ENCODE measurements at regions of chr12 and their contacts with region 1.

Region 1: GRCh38 chr12:74801625-74802024 is 264.0 kb downstream of the ATXN7L3B start:
- DNase-seq: peak; percentile 11
- H3K4me3 ChIP-seq: no peak overlapping the region
- H3K27ac ChIP-seq: no peak overlapping the region
- H3K4me1 ChIP-seq: no peaks in the 10 kb centered on the region
- H3K27me3 ChIP-seq: no peaks in the 10 kb centered on the region
- CTCF ChIP-seq: no peak

Region 2: DNA sequence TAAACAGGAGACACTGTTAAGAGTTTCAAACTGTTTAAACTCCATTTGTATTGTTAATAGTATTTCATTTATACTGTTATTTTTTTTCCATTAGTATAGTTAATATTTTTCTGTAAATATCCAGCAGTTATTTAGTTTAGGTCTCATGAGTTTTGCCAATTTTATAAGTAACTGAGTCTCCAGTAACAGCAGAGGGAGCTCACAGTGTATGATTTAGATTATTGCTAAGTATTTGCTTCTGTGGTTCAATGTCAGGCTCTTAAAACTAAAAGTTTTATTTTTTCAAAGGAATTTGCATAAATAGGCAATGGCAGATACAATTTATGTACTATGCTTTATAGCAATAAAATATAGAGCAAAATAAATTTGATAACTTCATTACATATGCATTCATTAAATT is 54.3 kb before region 1 on chr12:
- CTCF ChIA-PET with region 1: no interaction called
- POLR2A ChIA-PET with region 1: no interaction called
- intact Hi-C with region 1: loop called (anchors 5 kb)
- DNase-seq: peak; percentile 37
- H3K4me3 ChIP-seq: no peak overlapping the region
- H3K27ac ChIP-seq: no peak overlapping the region
- H3K4me1 ChIP-seq: no peaks in the 10 kb centered on the region
- H3K27me3 ChIP-seq: no peaks in the 10 kb centered on the region
- CTCF ChIP-seq: peak; percentile 39; the same call in 1 of the 2 replicates

Region 3: DNA sequence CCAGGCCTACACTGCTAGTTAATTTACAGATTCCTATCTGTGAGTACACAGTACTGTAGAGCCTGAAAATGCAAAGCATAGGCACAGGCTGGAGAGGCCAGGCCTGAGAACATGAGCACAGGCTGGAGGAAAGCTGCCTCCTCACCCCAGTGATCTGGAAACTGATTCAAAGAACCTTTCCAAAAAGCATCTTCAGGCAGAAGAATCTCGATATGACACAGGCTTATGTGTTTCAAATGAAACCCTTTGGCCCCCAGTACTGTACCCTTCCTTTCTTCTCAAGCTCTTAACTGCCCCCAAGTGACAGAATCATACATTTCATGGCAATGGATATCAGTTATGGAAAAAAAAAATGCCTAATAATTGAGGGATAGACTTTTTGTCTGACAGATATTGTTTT is 286.0 kb after region 1 on chr12:
- CTCF ChIA-PET with region 1: no interaction called
- POLR2A ChIA-PET with region 1: no interaction called
- intact Hi-C with region 1: loop called (anchors 5 kb)
- DNase-seq: peak; percentile 25
- H3K4me3 ChIP-seq: no peak overlapping the region
- H3K27ac ChIP-seq: no peak overlapping the region
- H3K4me1 ChIP-seq: no peaks in the 10 kb centered on the region
- H3K27me3 ChIP-seq: no peaks in the 10 kb centered on the region
- CTCF ChIP-seq: peak; percentile 34; the same call in 1 of the 2 replicates

Region 4: GRCh38 chr12:75289753-75290152 is 488.1 kb after region 1 on chr12:
- CTCF ChIA-PET with region 1: no interaction called
- POLR2A ChIA-PET with region 1: no interaction called
- intact Hi-C with region 1: loop called (anchors 5 kb)
- DNase-seq: peak; percentile 28
- H3K4me3 ChIP-seq: no peak overlapping the region
- H3K27ac ChIP-seq: no peak overlapping the region
- H3K4me1 ChIP-seq: no peaks in the 10 kb centered on the region
- H3K27me3 ChIP-seq: no peaks in the 10 kb centered on the region
- CTCF ChIP-seq: peak; percentile 51

Measured in A673 (cell line).